Activated T-helper 1 cell treated with anti-CD3 and anti-CD28 coated beads, Interleukin-12 subunit alpha, Interleukin-12 subunit beta, Interleukin-2, Interleukin-4 antibody, amounts not matched to agents 30 ng/mL and 10 ng/mL and 1 ng/mL, durations not matched to agents 14 hours and 24 hours and 36 hours (primary cell): ENCODE measurements at regions of chr20 and their contacts with region 1.

Region 1: DNA sequence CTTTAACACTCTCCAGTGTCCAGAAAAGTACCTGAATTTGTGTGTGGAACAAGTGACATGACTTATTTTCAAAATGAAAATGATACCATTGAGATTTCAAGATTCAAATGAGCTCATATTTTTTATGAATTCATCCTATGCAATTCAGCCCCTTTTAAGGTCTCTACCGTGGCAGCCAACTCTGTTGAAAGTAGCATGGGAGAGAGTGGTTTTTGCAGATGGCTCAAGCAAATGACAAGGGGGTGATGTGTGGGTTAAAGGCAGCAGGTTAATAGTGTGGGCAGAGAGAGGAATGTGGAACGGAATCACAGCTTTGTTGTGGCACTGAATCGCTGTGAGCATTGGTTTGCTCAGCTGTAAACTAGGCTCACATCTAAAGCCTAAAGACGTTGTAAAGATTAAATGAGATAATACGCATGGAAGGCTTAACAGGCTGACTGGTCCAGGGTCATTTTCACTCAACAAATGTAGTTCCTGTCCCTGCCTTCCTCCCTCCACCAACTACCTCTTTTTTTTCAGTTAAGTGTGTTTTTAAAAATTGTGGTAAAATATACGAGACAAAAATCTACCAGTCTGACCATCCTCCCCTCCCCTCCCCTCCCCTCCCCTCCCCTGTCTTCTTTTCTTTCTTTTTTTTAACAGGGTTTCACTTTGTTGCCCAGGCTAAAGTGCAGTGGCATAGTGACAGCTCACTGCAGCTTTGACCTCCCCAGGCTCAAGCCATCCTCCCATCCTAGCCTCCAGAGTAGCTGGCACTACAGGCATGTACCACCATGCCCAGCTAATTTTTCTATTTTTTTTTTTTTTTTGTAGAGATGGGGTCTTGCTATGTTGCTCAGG is 114.7 kb upstream of the ZNF217 start:
- DNase-seq: peak; percentile 26
- H3K4me3 Mint-ChIP-seq: peak overlapping the region; percentile 61
- H3K27ac Mint-ChIP-seq: peak overlapping the region; percentile 98
- H3K4me1 Mint-ChIP-seq: peaks cover 39% of the 10 kb centered on the region
- H3K27me3 Mint-ChIP-seq: no peaks in the 10 kb centered on the region

Region 2: DNA sequence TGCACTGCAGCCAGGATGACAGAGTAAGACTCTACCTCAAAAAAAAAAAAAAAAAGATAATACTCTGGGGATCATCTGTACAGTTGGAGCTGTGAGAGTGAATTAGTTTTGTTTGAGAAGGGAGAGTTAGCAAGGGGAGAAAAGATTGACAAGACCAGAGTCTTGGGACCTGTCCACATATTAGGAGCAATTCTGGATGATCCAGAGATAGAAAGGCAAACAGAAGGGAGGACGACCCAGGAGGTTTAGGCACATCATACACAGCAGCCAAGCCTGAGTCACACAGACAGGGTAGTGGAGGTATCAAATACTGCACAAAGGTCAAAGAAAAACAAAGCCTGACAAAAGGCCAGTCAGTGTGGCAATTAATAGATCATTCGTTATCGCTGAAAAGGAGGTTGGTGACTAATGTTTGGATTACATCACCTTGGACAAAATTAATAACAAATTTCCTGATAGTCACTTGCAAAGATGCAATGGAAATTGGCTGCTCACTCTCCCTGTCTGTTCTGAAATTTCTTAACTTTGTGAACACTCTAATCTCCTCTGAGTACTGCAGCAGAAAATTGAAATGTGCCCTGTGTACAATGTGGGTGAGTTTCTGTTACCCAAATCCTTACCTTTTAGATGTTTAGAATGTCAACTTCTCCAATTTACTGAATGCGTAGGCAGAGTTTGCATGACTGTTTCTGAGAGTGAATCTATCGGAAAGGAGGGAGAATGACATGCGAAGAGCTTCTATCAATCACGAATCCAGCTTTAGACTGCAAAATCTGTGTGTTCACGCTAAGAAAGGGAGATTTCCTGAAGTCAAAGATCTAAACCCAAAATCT is 630.8 kb before region 1 on chr20:
- intact Hi-C with region 1: loop called (anchors 5 kb)
- DNase-seq: no peak
- H3K4me3 Mint-ChIP-seq: no peak overlapping the region
- H3K27ac Mint-ChIP-seq: no peak overlapping the region
- H3K4me1 Mint-ChIP-seq: peaks cover 19% of the 10 kb centered on the region
- H3K27me3 Mint-ChIP-seq: no peaks in the 10 kb centered on the region

Region 3: DNA sequence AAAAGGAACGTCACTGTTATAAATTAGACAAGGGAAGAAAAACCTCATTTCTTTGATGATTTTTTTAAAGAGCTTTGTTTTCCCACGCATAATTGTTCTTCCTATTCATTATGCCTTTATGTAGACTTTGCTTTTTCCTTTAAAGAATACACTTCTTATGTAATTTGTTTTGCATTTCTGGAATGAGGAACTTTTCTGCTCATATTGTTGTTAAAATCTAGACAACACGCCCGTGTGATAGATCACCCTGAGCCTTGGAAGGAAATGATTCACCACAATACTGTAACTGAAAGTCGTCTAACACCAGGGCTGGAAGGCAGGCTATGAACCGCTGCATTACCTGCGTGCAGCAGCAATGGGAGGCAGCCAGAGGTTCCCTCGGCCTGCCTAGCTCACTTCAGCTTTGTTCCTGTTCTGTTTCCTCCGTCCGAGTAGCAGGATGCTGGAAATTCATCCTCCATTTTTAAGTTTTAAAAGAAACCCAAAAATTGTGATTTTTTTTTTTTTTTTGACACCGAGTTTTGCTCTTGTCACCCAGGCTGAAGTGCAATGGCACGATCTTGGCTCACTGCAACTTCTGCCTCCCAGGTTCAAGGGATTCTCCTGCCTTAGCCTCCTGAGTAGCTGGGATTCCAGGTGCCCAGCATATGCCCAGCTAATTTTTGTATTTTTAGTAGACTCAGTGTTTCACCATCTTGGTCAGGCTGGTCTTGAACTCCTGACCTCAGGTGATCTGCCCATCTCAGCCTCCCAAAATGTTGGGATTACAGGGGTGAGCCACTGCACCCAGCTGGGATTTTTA is 65.1 kb before region 1 on chr20:
- intact Hi-C with region 1: loop called (anchors 1 kb)
- DNase-seq: peak; percentile 66
- H3K4me3 Mint-ChIP-seq: peak overlapping the region; percentile 76
- H3K27ac Mint-ChIP-seq: peak overlapping the region; percentile 97
- H3K4me1 Mint-ChIP-seq: peaks cover 39% of the 10 kb centered on the region
- H3K27me3 Mint-ChIP-seq: no peaks in the 10 kb centered on the region

Region 4: GRCh38 chr20:53692413-53693067 is 15.8 kb before region 1 on chr20:
- intact Hi-C with region 1: loop called (anchors 1 kb)
- DNase-seq: no peak
- H3K4me3 Mint-ChIP-seq: no peak overlapping the region
- H3K27ac Mint-ChIP-seq: no peak overlapping the region
- H3K4me1 Mint-ChIP-seq: peaks cover 42% of the 10 kb centered on the region
- H3K27me3 Mint-ChIP-seq: no peaks in the 10 kb centered on the region

Region 5: DNA sequence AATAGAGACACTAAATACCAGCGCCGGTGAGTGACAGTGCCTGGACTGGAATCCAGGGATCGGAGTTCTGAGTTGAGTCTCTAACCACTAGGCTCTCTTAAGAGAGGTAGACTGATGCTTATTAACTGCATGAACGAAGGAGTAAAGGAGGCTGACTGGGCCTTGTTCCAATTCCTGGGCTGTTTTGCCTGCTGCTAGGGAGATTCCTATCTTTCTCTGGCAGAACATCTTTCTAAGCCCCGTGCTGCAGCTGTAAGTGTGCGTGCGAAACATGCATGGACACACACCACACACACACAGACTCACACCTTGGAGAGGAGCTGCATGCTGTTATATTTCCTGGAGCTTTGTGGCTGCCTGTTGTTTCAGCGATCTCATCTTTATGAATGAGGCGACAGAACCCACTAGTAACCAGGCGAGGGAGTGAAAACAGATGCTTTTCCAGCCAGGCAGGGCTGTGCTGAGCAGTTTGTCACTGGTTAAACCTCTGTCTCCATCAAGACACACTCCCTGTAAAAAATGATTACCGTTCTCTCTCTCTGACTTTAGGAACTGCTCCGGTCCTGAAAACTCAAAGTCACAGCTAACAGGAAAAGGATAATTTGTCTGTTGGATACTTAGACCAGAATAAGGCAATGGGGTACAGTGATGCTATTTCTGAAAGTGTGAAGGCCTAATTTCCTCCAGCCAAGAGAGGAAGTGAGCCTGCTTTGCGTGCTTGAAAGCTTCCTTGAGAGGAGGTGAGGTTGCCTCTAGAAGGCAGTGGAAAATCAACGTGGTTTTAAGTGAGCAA is 42.7 kb after region 1 on chr20:
- intact Hi-C with region 1: loop called (anchors 1 kb)
- DNase-seq: peak; percentile 51
- H3K4me3 Mint-ChIP-seq: peak overlapping the region; percentile 60
- H3K27ac Mint-ChIP-seq: peak overlapping the region; percentile 98
- H3K4me1 Mint-ChIP-seq: peaks cover 74% of the 10 kb centered on the region
- H3K27me3 Mint-ChIP-seq: no peaks in the 10 kb centered on the region

Region 6: DNA sequence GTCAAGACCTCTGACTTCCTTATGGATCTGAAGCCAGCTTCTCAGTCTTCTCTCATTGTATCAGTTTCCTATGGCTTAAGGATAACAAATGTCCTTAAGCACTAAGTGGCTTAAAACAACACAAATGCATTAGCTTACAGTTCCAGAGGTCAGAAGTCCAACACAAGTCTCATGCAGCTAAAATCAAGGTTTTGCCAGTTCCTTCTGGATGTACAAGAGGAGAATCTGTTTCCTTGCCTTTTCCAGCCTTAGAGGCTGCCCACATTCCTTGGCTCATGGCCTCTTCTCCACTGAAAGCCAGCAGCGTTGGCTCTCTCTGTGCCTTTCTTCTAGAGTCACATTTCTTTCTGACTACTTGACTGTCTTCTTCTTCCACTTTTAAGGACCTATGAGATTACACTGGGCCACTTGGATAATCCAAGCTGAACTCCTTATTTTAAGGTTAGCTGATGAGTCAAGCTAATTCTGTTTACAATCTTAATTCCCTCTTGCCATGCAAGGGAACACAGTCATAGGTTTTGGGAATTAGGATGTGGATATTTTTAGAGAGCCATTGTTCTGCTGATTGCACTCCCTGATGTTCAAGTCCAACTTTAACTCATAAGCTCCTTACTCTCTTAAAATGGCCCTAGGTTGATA is 183.1 kb after region 1 on chr20:
- intact Hi-C with region 1: loop called (anchors 1 kb)
- DNase-seq: no peak
- H3K4me3 Mint-ChIP-seq: no peak overlapping the region
- H3K27ac Mint-ChIP-seq: no peak overlapping the region
- H3K4me1 Mint-ChIP-seq: peaks cover 40% of the 10 kb centered on the region
- H3K27me3 Mint-ChIP-seq: no peaks in the 10 kb centered on the region

Region 7: GRCh38 chr20:53934421-53935343 is 226.3 kb after region 1 on chr20:
- intact Hi-C with region 1: loop called (anchors 5 kb)
- DNase-seq: no peak
- H3K4me3 Mint-ChIP-seq: peak overlapping the region; percentile 72
- H3K27ac Mint-ChIP-seq: peak overlapping the region; percentile 94
- H3K4me1 Mint-ChIP-seq: peaks cover 71% of the 10 kb centered on the region
- H3K27me3 Mint-ChIP-seq: no peaks in the 10 kb centered on the region